ENCODE measurements at regions of chr1 and their contacts with region 1.

Region 1: GRCh38 chr1:29379443-29380073 is 143.2 kb downstream of the PTPRU start:
- DNase-seq: peak; percentile 72
- ATAC-seq: peak; percentile 67
- H3K4me3 ChIP-seq: no peak overlapping the region
- H3K27ac ChIP-seq: no peak overlapping the region
- H3K4me1 ChIP-seq: peaks cover 0 to 5% of the 10 kb centered on the region in 2 experiments; a peak in 1 of 4 replicates
- H3K27me3 ChIP-seq: no peaks in the 10 kb centered on the region
- CTCF ChIP-seq: peak; percentile 87 to 99 (median 93)
- POLR2A ChIP-seq: no peak
- RAD21 ChIP-seq: peak; percentile 96

Region 2: DNA sequence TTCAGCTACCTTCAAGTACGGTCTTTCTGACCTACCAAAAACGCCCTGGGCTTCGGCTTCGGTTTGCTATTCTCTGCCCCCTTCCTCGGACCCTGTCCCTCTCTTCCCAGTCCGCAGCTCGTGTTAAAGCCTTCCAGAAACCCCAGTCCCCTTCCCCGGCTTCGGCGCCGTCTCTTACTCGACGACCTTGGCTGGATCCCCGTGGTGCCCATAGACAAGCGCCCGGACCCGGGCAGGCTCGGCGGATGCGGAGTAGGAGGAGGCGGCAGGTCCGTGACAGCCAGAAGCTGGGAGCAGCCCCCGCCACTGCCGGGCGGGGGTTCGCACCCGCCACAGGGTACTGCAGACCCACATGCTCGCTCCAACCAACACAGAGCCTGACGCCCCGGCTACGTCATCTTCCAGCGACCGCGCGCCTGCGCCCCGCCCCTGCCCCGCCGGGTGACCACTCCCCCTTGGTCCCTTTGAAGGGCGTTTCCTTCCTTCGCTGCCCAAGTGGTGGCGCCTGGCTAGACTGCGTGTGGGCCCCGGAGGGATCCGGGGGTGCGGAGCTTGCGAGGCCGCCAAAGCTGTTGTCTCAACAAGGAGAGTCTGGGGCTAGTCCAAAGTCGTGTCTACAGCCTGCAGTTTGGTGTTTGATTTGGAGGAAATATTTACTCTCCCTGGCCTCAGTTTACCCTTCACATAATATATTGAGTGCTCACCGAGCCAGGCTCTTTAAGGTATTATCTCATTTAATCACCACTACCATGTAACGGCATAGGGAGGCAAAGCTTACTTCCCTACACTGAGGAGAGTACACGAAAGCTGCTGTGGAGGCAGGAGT is 148.8 kb before region 1 on chr1 and contains the start of gene MECR:
- CTCF ChIA-PET with region 1: no interaction called
- POLR2A ChIA-PET with region 1: no interaction called
- RAD21 ChIA-PET with region 1: no interaction called
- intact Hi-C with region 1: loop called (anchors 10 kb)
- DNase-seq: peak; percentile 88
- ATAC-seq: peak; percentile 92
- H3K4me3 ChIP-seq: peak within 1 kb of the TSS; percentile 87 to 100
- H3K27ac ChIP-seq: peak within 1 kb of the TSS; percentile 61
- H3K4me1 ChIP-seq: peaks cover 7 to 22% of the 10 kb centered on the region in 2 experiments; a peak in 3 of 4 replicates
- H3K27me3 ChIP-seq: no peaks in the 10 kb centered on the region
- CTCF ChIP-seq: peak in 2 of 3 experiments; percentile 20; a peak in 1 of 6 replicates
- POLR2A ChIP-seq: peak; percentile 83
- RAD21 ChIP-seq: no peak
- total RNA-seq, gene MECR: 42.9 TPM

Region 3: GRCh38 chr1:29282924-29283811 is 96.4 kb before region 1 on chr1:
- CTCF ChIA-PET with region 1: no interaction called
- POLR2A ChIA-PET with region 1: no interaction called
- RAD21 ChIA-PET with region 1: no interaction called
- intact Hi-C with region 1: no loop called
- DNase-seq: peak; percentile 74
- ATAC-seq: peak; percentile 91
- H3K4me3 ChIP-seq: no peak overlapping the region
- H3K27ac ChIP-seq: no peak overlapping the region; the same call in 1 of the 2 replicates
- H3K4me1 ChIP-seq: peaks cover 4 to 20% of the 10 kb centered on the region in 2 experiments; a peak in 3 of 4 replicates
- H3K27me3 ChIP-seq: no peaks in the 10 kb centered on the region
- CTCF ChIP-seq: no peak
- POLR2A ChIP-seq: no peak
- RAD21 ChIP-seq: no peak

Region 4: DNA sequence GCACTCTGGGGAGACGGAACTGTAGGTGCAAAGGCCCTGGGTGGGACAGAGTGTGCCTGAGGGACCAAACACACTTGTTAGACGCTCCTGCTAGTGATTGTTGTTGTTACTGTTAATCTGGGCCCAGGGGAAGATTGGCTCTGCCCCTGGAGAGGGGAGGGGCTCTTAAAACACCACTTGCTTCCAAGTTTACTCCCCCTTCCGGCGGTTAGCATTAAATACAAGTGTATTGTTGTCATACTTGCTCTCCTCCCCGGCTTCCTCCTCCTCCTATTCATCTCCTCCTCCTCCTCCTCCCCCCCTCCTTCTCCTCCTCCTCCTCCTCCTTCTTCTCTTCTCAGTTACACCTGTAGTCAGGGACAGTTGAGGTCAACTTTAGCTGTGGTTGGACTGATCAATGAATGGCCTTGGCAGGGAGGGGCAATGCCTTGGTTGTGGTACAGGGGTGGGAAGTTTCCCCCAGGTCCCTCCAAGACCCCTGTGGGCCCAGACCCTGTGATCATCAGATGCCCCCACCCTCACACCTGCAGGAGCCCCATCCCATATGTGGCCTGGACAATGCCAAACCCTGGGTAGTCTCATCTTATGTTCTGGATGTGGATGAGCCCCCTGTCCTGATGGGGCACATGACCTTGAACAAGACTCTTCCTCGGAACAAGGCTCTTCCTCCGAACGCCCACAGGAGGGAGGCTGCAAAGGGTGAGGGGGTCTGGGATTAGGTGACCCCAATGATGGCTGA is 74.1 kb after region 1 on chr1:
- CTCF ChIA-PET with region 1: no interaction called
- POLR2A ChIA-PET with region 1: no interaction called
- RAD21 ChIA-PET with region 1: no interaction called
- intact Hi-C with region 1: no loop called
- DNase-seq: peak; percentile 70
- ATAC-seq: peak; percentile 97
- H3K4me3 ChIP-seq: no peak overlapping the region
- H3K27ac ChIP-seq: no peak overlapping the region
- H3K4me1 ChIP-seq: peaks cover 0 to 7% of the 10 kb centered on the region in 2 experiments; a peak in 1 of 4 replicates
- H3K27me3 ChIP-seq: no peaks in the 10 kb centered on the region
- CTCF ChIP-seq: peak; percentile 41 to 50 (median 42)
- POLR2A ChIP-seq: no peak
- RAD21 ChIP-seq: peak; percentile 33

Region 5: GRCh38 chr1:29793101-29793546 is 413.6 kb after region 1 on chr1:
- CTCF ChIA-PET with region 1: no interaction called
- POLR2A ChIA-PET with region 1: no interaction called
- RAD21 ChIA-PET with region 1: no interaction called
- intact Hi-C with region 1: loop called (anchors 10 kb)
- DNase-seq: peak; percentile 61
- ATAC-seq: peak; percentile 94
- H3K4me3 ChIP-seq: no peak overlapping the region
- H3K27ac ChIP-seq: no peak overlapping the region
- H3K4me1 ChIP-seq: peaks cover 0 to 11% of the 10 kb centered on the region in 2 experiments; a peak in 2 of 4 replicates
- H3K27me3 ChIP-seq: no peaks in the 10 kb centered on the region
- CTCF ChIP-seq: peak; percentile 85 to 92 (median 90)
- POLR2A ChIP-seq: no peak
- RAD21 ChIP-seq: peak; percentile 91

Region 6: GRCh38 chr1:30111431-30111830 is 731.9 kb after region 1 on chr1:
- CTCF ChIA-PET with region 1: interaction called, 4 read pairs
- POLR2A ChIA-PET with region 1: no interaction called
- RAD21 ChIA-PET with region 1: no interaction called
- intact Hi-C with region 1: loop called (anchors 2 kb)
- DNase-seq: peak; percentile 10
- ATAC-seq: peak; percentile 97
- H3K4me3 ChIP-seq: no peak overlapping the region
- H3K27ac ChIP-seq: no peak overlapping the region
- H3K4me1 ChIP-seq: no peaks in the 10 kb centered on the region
- H3K27me3 ChIP-seq: peaks cover 40% of the 10 kb centered on the region
- CTCF ChIP-seq: peak; percentile 50 to 73 (median 73); a peak in 5 of 6 replicates
- POLR2A ChIP-seq: no peak
- RAD21 ChIP-seq: peak; percentile 78

Region 7: GRCh38 chr1:30450818-30451233 is 1071.3 kb after region 1 on chr1:
- CTCF ChIA-PET with region 1: no interaction called
- POLR2A ChIA-PET with region 1: no interaction called
- RAD21 ChIA-PET with region 1: no interaction called
- intact Hi-C with region 1: loop called (anchors 5 kb)
- DNase-seq: no peak
- ATAC-seq: 0 out of 2 replicates have a peak, but pooled peaks have one; percentile 20
- H3K4me3 ChIP-seq: no peak overlapping the region
- H3K27ac ChIP-seq: no peak overlapping the region
- H3K4me1 ChIP-seq: no peaks in the 10 kb centered on the region
- H3K27me3 ChIP-seq: no peaks in the 10 kb centered on the region
- CTCF ChIP-seq: no peak
- POLR2A ChIP-seq: no peak
- RAD21 ChIP-seq: no peak

Measured in HCT116 (cell line).